Activated naive CD4-positive, alpha-beta T cell treated with anti-CD3 and anti-CD28 coated beads for 36 hours (primary cell): ENCODE measurements at regions of chr2 and their contacts with region 1.

Region 1: GRCh38 chr2:60806988-60807681 is 51.1 kb downstream of the PAPOLG start:
- DNase-seq: peak; percentile 85
- H3K4me3 Mint-ChIP-seq: peak overlapping the region; percentile 28
- H3K27ac Mint-ChIP-seq: peak overlapping the region; percentile 90
- H3K4me1 Mint-ChIP-seq: peaks cover 48% of the 10 kb centered on the region
- H3K27me3 Mint-ChIP-seq: no peaks in the 10 kb centered on the region

Region 2: GRCh38 chr2:60707750-60708371 is 99.3 kb before region 1 on chr2:
- CTCF ChIA-PET with region 1: no interaction called
- intact Hi-C with region 1: loop called (anchors 5 kb)
- DNase-seq: no peak
- H3K4me3 Mint-ChIP-seq: no peak overlapping the region
- H3K27ac Mint-ChIP-seq: no peak overlapping the region
- H3K4me1 Mint-ChIP-seq: no peaks in the 10 kb centered on the region
- H3K27me3 Mint-ChIP-seq: no peaks in the 10 kb centered on the region

Region 3: DNA sequence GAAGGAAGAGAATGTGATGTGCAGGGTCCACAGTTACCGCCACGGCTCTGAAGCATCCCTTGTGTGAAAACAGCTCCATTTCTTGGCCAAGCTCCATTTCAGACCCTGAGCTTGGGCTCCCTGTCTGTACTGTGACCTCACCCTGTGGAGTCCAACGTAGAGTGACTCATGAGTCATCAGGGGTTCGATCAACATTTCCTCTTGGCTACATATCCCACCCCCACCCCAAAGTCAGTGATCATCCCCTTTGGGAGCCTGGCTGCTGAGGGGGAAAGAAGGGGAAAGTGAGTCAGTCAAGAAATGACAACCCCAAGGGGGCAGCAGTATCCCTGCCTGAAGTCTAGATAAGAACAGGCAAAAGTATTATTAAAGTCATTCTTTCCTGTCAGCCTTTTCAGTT is 11.1 kb after region 1 on chr2:
- CTCF ChIA-PET with region 1: interaction called, 77 read pairs
- intact Hi-C with region 1: loop called (anchors 1 kb)
- DNase-seq: peak; percentile 80
- H3K4me3 Mint-ChIP-seq: no peak overlapping the region
- H3K27ac Mint-ChIP-seq: peak overlapping the region; percentile 89
- H3K4me1 Mint-ChIP-seq: peaks cover 52% of the 10 kb centered on the region
- H3K27me3 Mint-ChIP-seq: no peaks in the 10 kb centered on the region

Region 4: GRCh38 chr2:60899230-60899891 is 92.2 kb after region 1 on chr2:
- CTCF ChIA-PET with region 1: interaction called, 7 read pairs
- intact Hi-C with region 1: loop called (anchors 1 kb)
- DNase-seq: peak; percentile 77
- H3K4me3 Mint-ChIP-seq: peak overlapping the region; percentile 24
- H3K27ac Mint-ChIP-seq: peak overlapping the region; percentile 90
- H3K4me1 Mint-ChIP-seq: peaks cover 51% of the 10 kb centered on the region
- H3K27me3 Mint-ChIP-seq: no peaks in the 10 kb centered on the region

Region 5: GRCh38 chr2:60998628-60999545 is 191.8 kb after region 1 on chr2:
- CTCF ChIA-PET with region 1: interaction called, 128 read pairs
- intact Hi-C with region 1: loop called (anchors 1 kb)
- DNase-seq: no peak
- H3K4me3 Mint-ChIP-seq: no peak overlapping the region
- H3K27ac Mint-ChIP-seq: no peak overlapping the region
- H3K4me1 Mint-ChIP-seq: no peaks in the 10 kb centered on the region
- H3K27me3 Mint-ChIP-seq: no peaks in the 10 kb centered on the region

Region 6: DNA sequence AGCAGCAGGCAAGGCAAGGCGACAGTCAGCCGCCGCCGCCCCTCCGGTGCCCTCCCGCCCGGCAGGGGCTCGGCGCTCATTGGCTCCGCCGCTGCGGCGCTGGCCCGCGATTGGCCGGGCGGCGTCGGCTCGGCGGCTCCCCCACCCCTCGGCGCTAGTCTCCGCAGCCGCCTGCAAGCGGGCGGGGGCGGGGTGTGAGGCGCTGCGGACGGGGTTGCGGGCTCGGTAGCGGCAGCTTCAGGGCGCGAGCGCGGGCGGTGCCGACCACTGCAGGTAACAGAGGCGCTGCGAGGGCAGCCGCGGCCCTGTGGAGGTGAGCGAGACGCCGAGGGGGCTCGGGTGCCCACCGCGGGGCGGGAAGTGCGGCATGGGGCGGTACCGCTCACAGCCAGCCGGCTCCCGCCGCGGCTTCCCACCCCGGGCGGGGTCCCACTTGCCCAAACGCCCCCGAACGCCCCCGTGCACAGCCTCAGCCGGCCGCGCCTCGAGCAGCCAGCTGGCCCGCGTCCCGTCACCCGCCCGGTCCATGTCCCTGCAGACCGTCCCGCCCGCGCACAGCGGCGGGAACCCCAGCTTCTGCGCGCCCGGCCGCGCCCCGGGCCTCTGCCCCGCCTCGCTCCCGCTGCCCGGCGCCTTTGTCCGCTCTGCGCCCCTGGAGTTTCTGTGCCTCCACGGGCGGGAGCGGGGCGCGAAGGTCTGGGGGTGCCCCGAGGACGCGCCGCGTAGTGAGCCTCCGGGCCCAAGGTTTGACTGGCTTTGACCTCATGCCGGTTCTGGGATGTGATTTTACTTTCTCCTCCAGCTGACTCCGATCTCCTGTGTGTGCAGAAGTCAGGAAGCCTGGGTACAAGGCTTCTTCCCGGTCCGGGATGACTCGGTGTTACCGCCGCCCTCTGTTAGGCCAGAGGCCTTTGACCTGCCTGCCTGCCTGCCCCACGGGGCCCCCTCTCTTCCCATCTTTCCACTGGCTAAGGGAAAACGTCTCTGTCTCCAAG is 258.9 kb after region 1 on chr2 and contains the start of gene SANBR:
- CTCF ChIA-PET with region 1: no interaction called
- intact Hi-C with region 1: loop called (anchors 5 kb)
- DNase-seq: peak; percentile 83
- H3K4me3 Mint-ChIP-seq: peak within 1 kb of the TSS; percentile 84
- H3K27ac Mint-ChIP-seq: no peak within 1 kb of the TSS
- H3K4me1 Mint-ChIP-seq: peaks cover 8% of the 10 kb centered on the region
- H3K27me3 Mint-ChIP-seq: no peaks in the 10 kb centered on the region
- total RNA-seq, gene SANBR: 1.9 to 2.1 TPM

Region 7: DNA sequence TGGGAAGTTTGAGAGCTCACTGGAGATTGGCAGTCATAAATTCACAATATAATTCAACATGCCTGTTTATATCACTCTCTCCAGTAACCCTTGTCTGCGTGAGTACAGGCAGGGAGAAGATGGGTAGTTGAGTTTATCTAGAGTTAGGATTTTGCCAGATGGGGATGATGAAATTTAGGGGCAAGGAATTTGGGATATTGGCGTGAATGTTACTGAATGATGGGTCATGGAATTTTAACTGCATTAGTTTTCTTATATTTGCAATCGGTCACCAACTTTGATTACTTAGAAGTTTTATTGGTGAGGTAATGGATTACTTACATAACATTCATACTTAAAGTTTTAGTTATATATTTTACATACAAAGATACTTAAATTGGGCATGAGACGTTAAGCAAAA is 293.7 kb after region 1 on chr2:
- CTCF ChIA-PET with region 1: no interaction called
- intact Hi-C with region 1: no loop called
- DNase-seq: no peak
- H3K4me3 Mint-ChIP-seq: no peak overlapping the region
- H3K27ac Mint-ChIP-seq: no peak overlapping the region
- H3K4me1 Mint-ChIP-seq: no peaks in the 10 kb centered on the region
- H3K27me3 Mint-ChIP-seq: no peaks in the 10 kb centered on the region

Region 8: DNA sequence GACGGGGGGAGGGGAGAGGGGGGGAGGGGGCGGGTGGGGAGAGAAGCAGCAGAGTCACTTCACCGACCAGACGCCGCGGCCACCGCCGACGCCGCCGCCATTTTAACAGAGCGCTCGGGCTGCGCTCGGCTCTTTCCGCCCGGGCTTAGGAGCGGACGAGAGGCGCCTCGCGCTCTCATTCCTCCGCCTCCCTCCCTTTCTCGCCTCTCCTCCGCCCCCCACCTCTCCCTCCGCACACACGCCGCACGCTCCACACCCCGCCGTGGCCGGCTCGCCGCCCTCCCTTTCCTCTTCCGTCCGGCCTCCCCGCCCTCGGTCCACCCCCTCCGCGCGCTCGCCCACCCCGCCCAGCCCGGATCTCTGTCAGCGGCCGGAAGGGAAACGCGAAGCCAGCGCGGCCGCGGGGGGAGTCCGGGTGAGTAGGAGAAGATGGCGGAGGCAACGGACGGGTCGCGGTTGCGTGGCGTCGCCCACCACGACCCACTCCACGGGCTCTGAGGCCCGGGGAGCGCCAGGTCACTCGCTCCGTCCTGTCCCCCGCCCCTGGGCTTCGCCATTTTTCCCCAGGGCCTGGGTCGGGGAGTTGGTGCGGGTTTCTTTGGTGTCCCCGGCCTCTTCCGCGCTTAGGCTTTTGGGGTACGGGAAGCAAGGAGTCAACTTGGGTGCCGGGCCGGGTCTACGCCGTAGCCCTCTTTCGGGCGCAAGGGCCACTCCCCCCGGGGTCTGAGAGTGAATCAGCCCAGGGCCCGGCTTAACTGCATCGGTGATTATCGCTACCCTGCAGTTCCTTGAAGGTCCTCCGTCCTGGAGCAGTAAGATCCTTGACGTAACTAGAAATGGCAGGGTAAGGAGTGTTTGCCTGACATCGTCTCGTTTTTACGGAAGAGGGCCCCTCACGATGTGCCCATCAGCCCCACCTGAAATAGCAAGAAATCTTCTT is 664.1 kb after region 1 on chr2 and contains the start of gene USP34:
- CTCF ChIA-PET with region 1: no interaction called
- intact Hi-C with region 1: loop called (anchors 2 kb)
- DNase-seq: peak; percentile 94
- H3K4me3 Mint-ChIP-seq: peak within 1 kb of the TSS; percentile 98
- H3K27ac Mint-ChIP-seq: peak within 1 kb of the TSS; percentile 97
- H3K4me1 Mint-ChIP-seq: peaks cover 31% of the 10 kb centered on the region
- H3K27me3 Mint-ChIP-seq: no peaks in the 10 kb centered on the region
- total RNA-seq, gene USP34: 59.5 to 60.4 TPM